Mucosa of descending colon (tissue), 3 donors: ENCODE measurements at regions of chr1 and their contacts with region 1.

Region 1: GRCh38 chr1:165257969-165258459 is 98.5 kb downstream of the LMX1A start:
- DNase-seq: peak in 2 of 3 donors; percentile 74 to 93
- ATAC-seq: peak; percentile 95
- H3K4me3 ChIP-seq: no peak overlapping the region
- H3K4me1 ChIP-seq: no peaks in the 10 kb centered on the region
- CTCF ChIP-seq: peak; percentile 30

Region 2: DNA sequence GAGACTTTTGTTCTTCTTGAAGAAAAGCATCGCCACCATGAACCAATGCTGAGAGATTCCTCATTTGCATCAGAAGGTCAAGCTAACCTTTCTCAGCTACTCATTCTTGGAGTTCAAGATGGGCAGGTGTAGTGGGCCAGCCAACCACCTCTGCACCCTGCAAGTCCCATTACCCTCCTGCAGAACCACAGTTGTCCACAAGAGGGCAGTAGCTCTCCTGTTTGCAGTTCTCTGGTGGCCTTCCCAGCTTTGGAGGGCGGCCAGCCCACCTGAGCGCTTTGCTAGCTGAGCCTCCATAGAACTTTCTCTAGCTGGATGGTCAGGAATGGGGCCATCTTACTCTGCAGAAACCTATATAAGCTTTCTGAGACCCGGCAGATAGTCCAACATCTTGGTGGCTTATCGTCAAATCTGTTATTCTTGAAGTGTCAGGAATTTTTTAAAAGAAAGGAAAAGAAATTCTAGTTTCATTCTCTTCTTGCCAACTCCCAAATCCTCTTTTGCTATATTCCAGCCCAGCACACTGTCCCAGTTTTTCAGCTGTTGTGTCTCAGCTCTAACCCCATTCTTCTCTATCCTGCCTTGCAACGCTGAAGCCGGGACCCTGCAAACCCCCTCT is 109.5 kb after region 1 on chr1:
- intact Hi-C with region 1: loop called in 1 of 2 experiments (anchors 5 kb)
- DNase-seq: peak in 2 of 3 donors; percentile 63 to 88
- ATAC-seq: peak; percentile 69
- H3K4me3 ChIP-seq: no peak overlapping the region
- H3K4me1 ChIP-seq: no peaks in the 10 kb centered on the region
- CTCF ChIP-seq: peak; percentile 90